ENCODE measurements at regions of chr6 and their contacts with region 1.

Region 1: GRCh38 chr6:35468181-35468979 is at the start of gene RPL10A:
- DNase-seq: peak; percentile 98
- ATAC-seq: peak; percentile 85
- H3K4me3 ChIP-seq: peak within 1 kb of the TSS; percentile 82
- H3K27ac ChIP-seq: peak within 1 kb of the TSS; percentile 81
- H3K4me1 ChIP-seq: peaks cover 27% of the 10 kb centered on the region
- H3K27me3 ChIP-seq: no peaks in the 10 kb centered on the region
- CTCF ChIP-seq: peak; percentile 96
- total RNA-seq, gene RPL10A: 1,114 and 1,509 TPM in 2 replicates

Region 2: GRCh38 chr6:35485402-35485877 is 17.1 kb after region 1 on chr6:
- CTCF ChIA-PET with region 1: no interaction called
- POLR2A ChIA-PET with region 1: no interaction called
- intact Hi-C with region 1: loop called (anchors 2 kb)
- DNase-seq: peak; percentile 80
- ATAC-seq: peak; percentile 66
- H3K4me3 ChIP-seq: peak overlapping the region; percentile 53; the same call in 1 of the 2 replicates
- H3K27ac ChIP-seq: peak overlapping the region; percentile 90
- H3K4me1 ChIP-seq: peaks cover 39% of the 10 kb centered on the region
- H3K27me3 ChIP-seq: no peaks in the 10 kb centered on the region
- CTCF ChIP-seq: no peak

Region 3: DNA sequence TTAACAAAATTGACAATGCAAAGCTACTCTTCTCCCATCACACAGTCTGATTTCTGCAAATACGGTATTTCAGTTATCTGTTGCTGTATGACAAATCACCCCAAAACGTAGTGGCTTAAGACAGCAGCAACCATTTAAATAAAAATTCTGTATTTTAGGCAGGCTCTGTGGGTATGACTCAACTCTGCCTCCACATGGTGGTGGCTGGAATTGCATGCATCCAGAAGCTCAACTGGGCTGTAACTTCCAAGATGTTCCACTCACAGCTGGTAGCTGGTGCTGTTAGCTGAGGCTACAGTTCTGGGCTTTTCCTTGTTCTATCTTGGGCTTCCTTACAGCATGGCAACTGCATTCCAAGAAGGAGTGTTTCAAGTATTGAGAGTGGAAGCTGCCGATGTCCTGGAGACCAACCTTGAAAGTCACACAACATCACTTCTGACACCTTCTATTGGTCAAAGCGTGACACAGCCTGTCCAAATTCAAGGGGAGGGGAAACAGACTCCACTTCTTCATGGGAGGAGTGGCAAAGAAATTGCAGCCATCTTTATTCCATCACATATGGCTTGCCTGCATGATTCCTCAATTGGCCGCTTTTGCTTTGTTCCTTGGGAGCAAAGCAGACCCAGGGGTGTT is 84.0 kb after region 1 on chr6:
- CTCF ChIA-PET with region 1: no interaction called
- POLR2A ChIA-PET with region 1: no interaction called
- intact Hi-C with region 1: no loop called
- DNase-seq: peak; percentile 80
- ATAC-seq: peak; percentile 40; the same call in 1 of the 2 replicates
- H3K4me3 ChIP-seq: no peak overlapping the region
- H3K27ac ChIP-seq: no peak overlapping the region
- H3K4me1 ChIP-seq: no peaks in the 10 kb centered on the region
- H3K27me3 ChIP-seq: no peaks in the 10 kb centered on the region
- CTCF ChIP-seq: peak; percentile 94